AG04450 (cell line): ENCODE measurements at regions of chr1 and their contacts with region 1.

Region 1: DNA sequence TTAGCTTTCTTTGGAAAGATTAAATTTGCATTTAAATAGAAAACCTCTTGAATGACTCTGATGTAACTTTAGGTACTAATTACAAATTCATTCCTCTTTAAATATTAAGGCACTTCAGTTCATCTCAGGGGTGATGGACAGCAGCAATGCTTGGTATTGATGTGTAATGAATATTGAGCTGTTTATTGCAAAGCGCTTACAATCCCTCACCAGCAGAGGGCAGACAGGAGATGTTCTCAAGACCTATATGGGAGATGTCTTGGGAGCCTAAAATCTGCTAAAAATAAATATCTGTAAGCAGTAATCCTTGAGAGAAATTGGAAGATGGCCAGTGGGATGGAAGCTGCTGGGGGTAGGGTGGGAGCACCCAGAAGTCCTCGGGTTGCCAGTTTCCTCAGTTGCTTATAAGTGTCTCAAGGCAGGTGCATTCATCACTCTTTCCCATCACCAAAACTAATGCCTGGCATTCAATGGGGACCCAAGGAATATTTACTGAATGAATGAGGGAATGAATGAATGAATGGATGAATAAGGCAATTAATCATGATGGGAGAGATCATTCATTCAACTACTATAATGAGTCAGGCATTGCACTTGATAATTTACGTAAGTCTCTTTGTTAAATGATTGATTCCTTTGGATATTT is 2.3 kb downstream of the KLHDC8A start:
- DNase-seq: peak; percentile 56
- H3K4me3 ChIP-seq: no peak overlapping the region
- H3K27ac ChIP-seq: no peak overlapping the region
- H3K27me3 ChIP-seq: peaks cover 17% of the 10 kb centered on the region
- CTCF ChIP-seq: peak; percentile 94

Region 2: DNA sequence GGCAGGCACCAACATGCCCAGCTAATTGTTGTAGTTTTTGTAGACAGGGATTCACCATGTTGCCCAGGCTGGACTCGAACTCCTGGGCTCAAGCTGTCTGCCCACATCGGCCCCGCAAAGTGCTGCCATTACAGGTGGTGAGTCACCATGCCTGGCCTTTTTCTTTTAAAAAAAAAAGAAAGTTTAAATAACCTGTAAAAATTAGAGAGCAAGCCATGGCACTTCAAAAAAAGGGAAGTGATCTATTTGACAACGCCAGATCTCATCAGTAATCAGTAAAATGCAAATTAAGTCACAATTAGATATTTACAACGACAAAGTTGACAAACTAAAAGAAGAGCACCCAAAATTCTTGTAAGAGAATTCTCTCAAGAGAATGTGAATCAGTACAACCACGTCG is 229.7 kb before region 1 on chr1:
- CTCF ChIA-PET with region 1: no interaction called
- POLR2A ChIA-PET with region 1: no interaction called
- DNase-seq: no peak
- H3K4me3 ChIP-seq: no peak overlapping the region
- H3K27ac ChIP-seq: no peak overlapping the region
- H3K27me3 ChIP-seq: no peaks in the 10 kb centered on the region
- CTCF ChIP-seq: no peak

Region 3: GRCh38 chr1:205321164-205321958 is 33.0 kb before region 1 on chr1 and contains the start of gene NUAK2:
- CTCF ChIA-PET with region 1: interaction called, 14 read pairs
- POLR2A ChIA-PET with region 1: no interaction called
- DNase-seq: peak; percentile 61
- H3K4me3 ChIP-seq: peak within 1 kb of the TSS; percentile 93
- H3K27ac ChIP-seq: peak within 1 kb of the TSS; percentile 80
- H3K27me3 ChIP-seq: peaks cover 4% of the 10 kb centered on the region
- CTCF ChIP-seq: peak; percentile 41
- polyA plus RNA-seq, gene NUAK2: 7.0 and 8.2 TPM in 2 replicates

Region 4: DNA sequence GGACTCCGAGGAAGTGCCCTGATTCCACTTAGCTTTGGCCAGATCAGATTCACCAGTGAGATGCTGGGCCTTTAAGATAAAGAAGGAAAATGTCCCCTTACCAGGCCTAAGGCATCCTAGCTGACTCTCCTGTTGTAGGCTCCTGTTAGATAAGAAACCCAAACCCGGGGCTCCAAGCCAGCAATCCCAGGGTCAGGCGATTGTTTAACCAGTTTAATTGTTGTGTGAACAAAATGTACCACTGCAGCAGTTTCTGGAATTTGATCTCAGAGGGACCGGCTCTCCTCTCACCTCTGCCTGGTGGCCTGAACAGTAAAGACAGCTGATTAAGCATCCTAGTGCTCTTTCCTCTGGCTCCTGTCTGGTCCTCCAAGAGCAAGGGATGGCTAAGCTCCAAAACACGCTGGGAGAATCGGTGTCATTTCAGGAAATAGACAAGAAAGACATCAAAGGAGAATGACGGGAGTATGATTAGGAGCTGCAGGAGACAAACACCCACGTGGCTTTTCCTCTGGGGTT is 11.6 kb after region 1 on chr1:
- CTCF ChIA-PET with region 1: interaction called, 38 read pairs
- POLR2A ChIA-PET with region 1: no interaction called
- DNase-seq: no peak
- H3K4me3 ChIP-seq: no peak overlapping the region
- H3K27ac ChIP-seq: no peak overlapping the region
- H3K27me3 ChIP-seq: peaks cover 4% of the 10 kb centered on the region
- CTCF ChIP-seq: no peak

Region 5: GRCh38 chr1:205391386-205391785 is 37.0 kb after region 1 on chr1:
- CTCF ChIA-PET with region 1: interaction called, 11 read pairs
- POLR2A ChIA-PET with region 1: no interaction called
- DNase-seq: no peak
- H3K4me3 ChIP-seq: no peak overlapping the region
- H3K27ac ChIP-seq: no peak overlapping the region
- H3K27me3 ChIP-seq: peaks cover 18% of the 10 kb centered on the region
- CTCF ChIP-seq: no peak

Region 6: DNA sequence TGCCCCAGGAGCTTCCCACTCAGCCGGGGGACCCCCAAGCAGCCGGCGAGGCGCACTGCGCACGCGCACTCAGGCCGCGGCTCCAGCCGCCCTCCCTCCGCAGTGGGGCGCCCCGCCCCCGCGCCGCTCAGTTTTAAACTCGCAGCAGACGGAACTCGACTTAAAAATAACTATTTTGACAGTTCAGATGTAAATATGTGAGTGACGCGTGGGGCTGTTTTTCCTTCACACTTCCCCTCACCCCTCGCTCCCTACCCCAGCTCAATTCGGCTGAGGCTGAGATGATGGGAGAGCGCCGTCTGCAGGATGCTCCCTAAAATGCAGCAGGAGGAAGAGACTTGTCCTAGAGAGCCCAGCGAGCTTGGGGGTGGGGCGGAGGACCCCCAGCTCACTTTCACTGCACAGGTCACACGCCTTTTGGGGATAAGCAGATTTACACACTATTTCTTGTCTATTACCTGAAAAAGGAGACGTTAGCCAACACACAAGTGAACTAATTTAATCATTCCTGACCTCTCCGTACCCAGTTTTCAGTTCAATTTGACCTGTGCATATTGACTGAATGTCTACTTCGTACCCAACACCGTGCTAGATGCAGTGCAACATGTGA is 76.4 kb after region 1 on chr1:
- CTCF ChIA-PET with region 1: interaction called, 43 read pairs
- POLR2A ChIA-PET with region 1: no interaction called
- DNase-seq: no peak
- H3K4me3 ChIP-seq: peak overlapping the region; percentile 66
- H3K27ac ChIP-seq: no peak overlapping the region
- H3K27me3 ChIP-seq: peaks cover 39% of the 10 kb centered on the region
- CTCF ChIP-seq: peak; percentile 98

Region 7: GRCh38 chr1:205493241-205494085 is 139.1 kb after region 1 on chr1:
- CTCF ChIA-PET with region 1: interaction called, 165 read pairs
- POLR2A ChIA-PET with region 1: no interaction called
- DNase-seq: no peak
- H3K4me3 ChIP-seq: no peak overlapping the region
- H3K27ac ChIP-seq: no peak overlapping the region
- H3K27me3 ChIP-seq: peaks cover 40% of the 10 kb centered on the region
- CTCF ChIP-seq: no peak